Right lobe of liver (tissue), 6 donors: ENCODE measurements at regions of chr9 and their contacts with region 1.

Region 1: DNA sequence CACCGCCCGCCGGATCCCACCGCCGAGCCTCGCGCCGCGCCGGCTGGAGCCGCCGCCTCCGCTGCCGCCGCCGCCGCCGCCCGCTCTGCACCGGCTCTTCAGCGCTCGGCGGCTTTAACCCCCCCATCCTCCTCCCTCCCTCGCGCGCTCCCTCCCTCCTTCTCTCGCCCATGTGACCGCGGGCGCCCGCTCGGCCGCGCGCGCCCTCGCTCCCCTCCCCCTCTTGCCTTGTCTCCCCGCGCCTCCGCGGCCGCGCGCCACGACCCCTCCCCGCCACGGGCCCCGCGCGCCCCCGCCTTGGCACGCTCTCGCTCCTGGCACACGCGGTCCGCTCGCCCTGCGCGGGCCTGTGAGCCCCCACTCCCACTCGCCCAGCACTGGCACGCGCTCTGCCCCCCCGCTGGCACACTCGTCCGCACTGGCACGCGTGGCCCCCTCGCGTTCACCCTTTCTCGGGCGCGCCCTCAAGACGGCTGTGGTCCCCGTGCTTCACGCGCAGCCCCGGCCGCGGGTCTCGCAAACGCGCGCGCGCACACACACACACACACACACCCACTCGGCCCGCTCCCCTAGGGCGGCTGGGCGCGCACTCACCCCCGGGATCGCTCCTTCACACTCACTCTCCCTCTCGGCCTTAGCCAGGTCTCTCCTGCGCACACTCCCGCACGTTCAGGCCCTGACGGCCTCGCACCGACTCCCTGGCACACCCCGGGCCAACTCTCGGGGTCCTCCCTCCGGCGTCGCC is at the start of gene CNTFR:
- DNase-seq: peak in 1 of 3 donors; percentile 79
- ATAC-seq: peak in 3 of 4 donors; percentile 9 to 30 (median 23)
- H3K4me3 ChIP-seq: peak within 1 kb of the TSS in 2 of 3 donors; percentile 46 to 52
- H3K27ac ChIP-seq: peak within 1 kb of the TSS in 1 of 3 donors; percentile 66
- H3K4me1 ChIP-seq: peaks cover 0 to 39% (median 13%) of the 10 kb centered on the region in 4 donors
- H3K27me3 ChIP-seq: no peaks in the 10 kb centered on the region
- CTCF ChIP-seq: no peak
- POLR2A ChIP-seq: no peak
- total RNA-seq, gene CNTFR: 0.71 to 12.5 (median 3.4) TPM

Region 2: GRCh38 chr9:33867747-33868439 is 721.9 kb before region 1 on chr9:
- intact Hi-C with region 1: no loop called
- DNase-seq: peak in 1 of 3 donors; percentile 58
- ATAC-seq: peak; percentile 44 to 76 (median 71)
- H3K4me3 ChIP-seq: no peak overlapping the region
- H3K27ac ChIP-seq: peak overlapping the region in 1 of 3 donors; percentile 31
- H3K4me1 ChIP-seq: peaks cover 0 to 28% (median 10%) of the 10 kb centered on the region in 4 donors
- H3K27me3 ChIP-seq: no peaks in the 10 kb centered on the region
- CTCF ChIP-seq: no peak
- POLR2A ChIP-seq: no peak

Region 3: GRCh38 chr9:34546834-34547827 is 42.7 kb before region 1 on chr9:
- intact Hi-C with region 1: loop called (anchors 2 to 5 kb)
- DNase-seq: peak in 2 of 3 donors; percentile 66 to 77
- ATAC-seq: peak; percentile 63 to 74 (median 73)
- H3K4me3 ChIP-seq: no peak overlapping the region
- H3K27ac ChIP-seq: no peak overlapping the region
- H3K4me1 ChIP-seq: peaks cover 0 to 17% (median 8%) of the 10 kb centered on the region in 4 donors
- H3K27me3 ChIP-seq: no peaks in the 10 kb centered on the region
- CTCF ChIP-seq: peak; percentile 59 to 74 (median 70)
- POLR2A ChIP-seq: no peak

Region 4: GRCh38 chr9:34554211-34555001 is 35.4 kb before region 1 on chr9:
- intact Hi-C with region 1: loop called in 1 of 2 experiments (anchors 5 kb)
- DNase-seq: peak in 1 of 3 donors; percentile 27
- ATAC-seq: no peak
- H3K4me3 ChIP-seq: no peak overlapping the region
- H3K27ac ChIP-seq: no peak overlapping the region
- H3K4me1 ChIP-seq: peaks cover 0 to 11% (median 4%) of the 10 kb centered on the region in 4 donors
- H3K27me3 ChIP-seq: no peaks in the 10 kb centered on the region
- CTCF ChIP-seq: no peak
- POLR2A ChIP-seq: no peak